Dendritic cell treated with granulocyte-macrophage colony-stimulating factor and Interleukin-4, amounts not matched to agents 40 ng/mL and 50 ng/mL, for 4 days (primary cell): ENCODE measurements at regions of chr1 and their contacts with region 1.

Region 1: GRCh38 chr1:202571347-202572339 is 138.6 kb downstream of the SYT2 start:
- H3K4me3 Mint-ChIP-seq: no peak overlapping the region
- H3K27ac Mint-ChIP-seq: no peak overlapping the region
- H3K4me1 Mint-ChIP-seq: no peaks in the 10 kb centered on the region
- H3K27me3 Mint-ChIP-seq: peaks cover 67% of the 10 kb centered on the region

Region 2: DNA sequence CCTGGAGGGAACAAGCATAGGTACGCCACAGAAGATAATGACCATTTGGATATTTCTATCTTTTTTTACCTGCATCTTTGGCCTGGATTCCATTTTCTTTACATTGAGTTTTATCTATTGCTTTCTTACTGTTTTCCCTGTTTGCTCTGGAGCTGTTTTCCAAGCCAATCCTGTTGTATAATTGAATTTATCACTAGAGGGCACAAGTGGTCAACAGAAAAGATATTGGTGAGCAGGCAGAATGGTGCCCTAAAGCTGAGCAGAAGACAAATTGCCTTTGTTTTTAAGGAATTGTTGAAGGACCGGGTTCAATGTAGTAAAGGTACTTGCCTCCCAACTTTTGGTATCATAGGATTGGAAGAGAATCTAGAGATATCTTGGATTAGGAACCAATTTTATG is 70.4 kb before region 1 on chr1:
- intact Hi-C with region 1: loop called (anchors 1 kb)
- H3K4me3 Mint-ChIP-seq: no peak overlapping the region
- H3K27ac Mint-ChIP-seq: no peak overlapping the region
- H3K4me1 Mint-ChIP-seq: no peaks in the 10 kb centered on the region
- H3K27me3 Mint-ChIP-seq: peaks cover 78% of the 10 kb centered on the region